Activated B cell treated with CpG ODN at 0.5 μM for 24 hours (primary cell): ENCODE measurements at regions of chr20 and their contacts with region 1.

Region 1: GRCh38 chr20:32535953-32536823 is 48.9 kb downstream of the NOL4L start:
- DNase-seq: peak; percentile 62
- ATAC-seq: peak; percentile 70
- H3K4me3 Mint-ChIP-seq: peak overlapping the region; percentile 84
- H3K27ac Mint-ChIP-seq: peak overlapping the region; percentile 77
- H3K4me1 Mint-ChIP-seq: peaks cover 76% of the 10 kb centered on the region
- H3K27me3 Mint-ChIP-seq: no peaks in the 10 kb centered on the region
- CTCF ChIP-seq: no peak

Region 2: DNA sequence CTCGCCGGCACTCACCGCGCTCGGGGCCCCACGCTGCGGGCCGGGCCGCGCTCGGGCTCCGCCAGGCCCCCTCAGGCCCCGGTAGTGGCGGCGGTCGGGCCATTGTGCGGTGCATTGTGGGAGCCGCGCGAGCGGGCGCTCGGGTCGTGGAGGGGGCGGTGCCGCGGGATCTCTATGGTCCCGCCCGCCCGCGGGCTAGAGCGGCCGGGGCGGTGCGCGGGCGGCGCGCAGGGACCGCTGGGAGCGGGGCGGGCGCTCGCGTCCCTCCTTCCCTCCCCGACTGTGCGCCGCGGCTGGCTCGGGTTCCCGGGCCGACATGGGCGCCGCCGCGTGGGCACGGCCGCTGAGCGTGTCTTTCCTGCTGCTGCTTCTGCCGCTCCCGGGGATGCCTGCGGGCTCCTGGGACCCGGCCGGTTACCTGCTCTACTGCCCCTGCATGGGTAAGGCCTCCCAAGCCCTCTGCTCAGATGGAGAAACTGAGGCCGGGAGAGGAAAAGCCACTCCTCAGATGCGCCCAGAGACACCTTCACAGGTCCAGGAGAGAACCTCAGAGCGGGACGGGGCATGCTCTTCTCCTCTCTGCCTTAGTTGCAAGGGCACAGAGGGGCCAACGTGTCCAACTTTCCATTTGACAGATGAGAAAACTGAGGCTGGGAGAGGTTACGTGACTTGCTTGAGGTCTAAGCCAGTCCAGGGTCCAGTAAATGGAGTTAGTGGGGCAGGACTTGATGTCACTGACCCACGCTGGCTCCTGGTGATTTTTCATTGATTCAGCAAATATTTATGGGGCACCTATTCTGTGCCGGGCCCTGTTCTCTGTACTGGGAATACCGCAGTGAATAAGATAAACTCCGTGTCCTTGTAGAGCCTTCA is 328.3 kb before region 1 on chr20 and contains the starts of genes PLAGL2 and POFUT1:
- CTCF ChIA-PET with region 1: no interaction called
- POLR2A ChIA-PET with region 1: no interaction called
- intact Hi-C with region 1: loop called (anchors 5 kb)
- DNase-seq: peak; percentile 92
- ATAC-seq: peak; percentile 97
- H3K4me3 Mint-ChIP-seq: peak within 1 kb of the TSS; percentile 91
- H3K27ac Mint-ChIP-seq: peak within 1 kb of the TSS; percentile 85
- H3K4me1 Mint-ChIP-seq: peaks cover 62% of the 10 kb centered on the region
- H3K27me3 Mint-ChIP-seq: no peaks in the 10 kb centered on the region
- CTCF ChIP-seq: no peak
- total RNA-seq, gene PLAGL2: 17.3 and 17.9 TPM in 2 replicates
- total RNA-seq, gene POFUT1: 20.4 and 24.0 TPM in 2 replicates

Region 3: GRCh38 chr20:32484958-32485769 is 51.0 kb before region 1 on chr20:
- CTCF ChIA-PET with region 1: no interaction called
- POLR2A ChIA-PET with region 1: no interaction called
- intact Hi-C with region 1: loop called (anchors 2 kb)
- DNase-seq: no peak
- ATAC-seq: peak; percentile 80
- H3K4me3 Mint-ChIP-seq: peak overlapping the region; percentile 86
- H3K27ac Mint-ChIP-seq: peak overlapping the region; percentile 69
- H3K4me1 Mint-ChIP-seq: peaks cover 14% of the 10 kb centered on the region
- H3K27me3 Mint-ChIP-seq: no peaks in the 10 kb centered on the region
- CTCF ChIP-seq: peak; percentile 82

Region 4: GRCh38 chr20:32521780-32522525 is 14.2 kb before region 1 on chr20:
- CTCF ChIA-PET with region 1: interaction called, 10 read pairs
- POLR2A ChIA-PET with region 1: interaction called, 9 read pairs
- intact Hi-C with region 1: no loop called
- DNase-seq: peak; percentile 53
- ATAC-seq: peak; percentile 73
- H3K4me3 Mint-ChIP-seq: no peak overlapping the region
- H3K27ac Mint-ChIP-seq: no peak overlapping the region
- H3K4me1 Mint-ChIP-seq: peaks cover 40% of the 10 kb centered on the region
- H3K27me3 Mint-ChIP-seq: no peaks in the 10 kb centered on the region
- CTCF ChIP-seq: no peak

Region 5: DNA sequence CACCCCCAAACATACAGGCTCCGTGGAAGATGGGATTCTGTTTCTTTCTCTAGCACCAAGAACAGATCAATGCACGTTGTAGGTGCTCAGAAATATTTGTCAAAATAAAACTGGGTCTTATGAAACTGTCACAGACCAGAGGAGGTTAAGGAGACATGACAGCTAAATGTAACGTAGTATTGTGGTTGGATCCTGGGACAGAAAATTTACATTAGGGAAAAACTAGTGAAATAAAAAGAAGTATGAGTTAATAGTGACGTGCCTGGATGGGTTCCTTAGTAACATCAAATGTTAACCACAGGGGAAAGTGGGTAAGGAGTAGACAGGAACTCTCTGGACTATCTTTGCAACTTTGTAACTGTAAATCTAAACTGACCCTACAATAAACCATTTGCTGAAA is 17.4 kb after region 1 on chr20:
- CTCF ChIA-PET with region 1: no interaction called
- POLR2A ChIA-PET with region 1: interaction called, 3 read pairs
- intact Hi-C with region 1: loop called (anchors 2 kb)
- DNase-seq: no peak
- ATAC-seq: no peak
- H3K4me3 Mint-ChIP-seq: no peak overlapping the region
- H3K27ac Mint-ChIP-seq: no peak overlapping the region
- H3K4me1 Mint-ChIP-seq: peaks cover 5% of the 10 kb centered on the region
- H3K27me3 Mint-ChIP-seq: peaks cover 2% of the 10 kb centered on the region
- CTCF ChIP-seq: no peak

Region 6: DNA sequence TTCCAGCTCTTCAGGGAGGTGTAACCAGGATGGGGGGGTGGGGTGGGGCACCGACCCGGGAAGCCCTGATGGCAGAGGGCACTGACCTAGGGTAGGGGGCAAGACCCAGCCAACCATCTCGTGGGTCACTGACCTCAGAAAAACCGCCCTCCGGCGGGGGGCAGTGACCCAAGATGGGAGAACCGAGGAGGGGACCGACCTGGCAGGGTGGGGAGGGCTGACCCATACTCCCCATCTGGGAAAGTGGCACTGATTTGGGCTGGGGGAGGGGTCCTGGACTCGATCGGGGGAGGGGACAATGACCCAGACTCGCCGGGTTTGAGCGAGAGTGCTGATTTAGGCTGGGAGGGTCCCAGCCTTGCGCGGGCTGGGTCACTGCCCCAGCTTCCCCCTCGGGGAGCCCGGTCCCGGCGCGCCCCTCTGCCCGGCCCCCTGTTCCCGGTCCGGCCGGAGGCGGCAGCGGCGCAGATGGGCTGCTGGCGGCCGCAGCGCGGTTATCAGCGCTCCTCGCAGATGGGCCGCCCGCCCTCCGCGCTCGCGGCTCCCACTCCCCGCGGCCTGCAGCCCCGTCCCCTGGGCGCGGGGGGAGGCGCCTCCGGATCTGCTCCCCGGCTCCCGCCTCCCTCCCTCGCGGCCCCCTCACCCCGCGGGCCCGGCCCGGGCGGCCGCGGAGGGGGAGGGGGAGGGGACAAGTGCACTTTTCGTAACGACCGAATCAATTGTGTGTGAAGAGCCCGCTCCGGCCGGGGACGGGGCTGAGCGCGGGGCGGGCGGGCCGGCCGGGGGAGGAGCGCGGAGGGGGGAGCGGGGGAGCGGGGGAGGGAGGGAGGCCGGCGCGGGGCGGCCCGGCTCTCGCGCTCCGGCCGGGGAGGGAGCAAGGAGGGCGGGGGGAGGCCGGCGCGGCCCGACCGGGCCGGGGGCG is 46.7 kb after region 1 on chr20:
- CTCF ChIA-PET with region 1: no interaction called
- POLR2A ChIA-PET with region 1: no interaction called
- intact Hi-C with region 1: loop called (anchors 1 kb)
- DNase-seq: peak; percentile 34
- ATAC-seq: peak; percentile 18
- H3K4me3 Mint-ChIP-seq: no peak overlapping the region
- H3K27ac Mint-ChIP-seq: no peak overlapping the region
- H3K4me1 Mint-ChIP-seq: peaks cover 32% of the 10 kb centered on the region
- H3K27me3 Mint-ChIP-seq: peaks cover 5% of the 10 kb centered on the region
- CTCF ChIP-seq: no peak

Region 7: DNA sequence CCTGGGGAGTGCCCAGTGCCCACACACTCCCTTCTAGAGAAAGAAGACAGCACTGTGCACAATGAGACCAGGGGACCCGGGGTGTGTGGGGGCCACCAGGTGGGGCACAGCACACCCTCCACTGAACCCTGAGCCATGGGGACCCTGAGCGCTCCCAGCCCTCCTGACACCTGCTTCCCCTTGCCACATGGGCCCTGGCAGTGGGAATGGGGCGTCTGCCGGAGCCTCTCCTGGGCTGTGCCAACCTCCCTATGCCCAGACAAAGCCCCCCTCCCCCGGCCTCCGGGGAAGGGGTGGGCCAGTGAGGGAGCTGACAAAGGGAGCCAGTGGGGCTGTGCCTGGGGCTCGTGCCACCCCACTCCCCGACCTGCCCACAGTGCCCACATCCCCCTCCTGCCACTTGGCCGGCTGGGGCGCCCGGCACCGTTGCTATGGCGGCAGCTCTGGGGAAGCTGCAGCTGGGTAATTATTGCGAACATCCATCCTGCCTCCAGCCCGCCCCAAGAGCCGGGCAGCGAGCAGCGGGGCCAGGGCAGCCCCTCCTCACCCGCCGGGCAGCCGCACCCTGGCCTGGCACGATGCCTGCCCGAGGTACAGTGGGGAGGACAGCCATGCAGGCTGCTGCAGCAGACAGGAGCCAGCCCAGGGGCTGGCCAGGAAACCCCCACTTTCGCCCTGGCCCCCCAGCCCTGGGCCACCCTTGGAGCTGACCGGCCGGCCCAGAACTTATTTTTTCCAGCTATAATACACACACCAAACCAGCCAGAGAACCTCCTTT is 90.9 kb after region 1 on chr20:
- CTCF ChIA-PET with region 1: no interaction called
- POLR2A ChIA-PET with region 1: interaction called, 3 read pairs
- intact Hi-C with region 1: loop called (anchors 5 kb)
- DNase-seq: peak; percentile 27
- ATAC-seq: peak; percentile 49
- H3K4me3 Mint-ChIP-seq: peak overlapping the region; percentile 57
- H3K27ac Mint-ChIP-seq: no peak overlapping the region
- H3K4me1 Mint-ChIP-seq: peaks cover 13% of the 10 kb centered on the region
- H3K27me3 Mint-ChIP-seq: peaks cover 2% of the 10 kb centered on the region
- CTCF ChIP-seq: no peak